Caco-2 (cell line): ENCODE measurements at regions of chr10 and their contacts with region 1.

Region 1: DNA sequence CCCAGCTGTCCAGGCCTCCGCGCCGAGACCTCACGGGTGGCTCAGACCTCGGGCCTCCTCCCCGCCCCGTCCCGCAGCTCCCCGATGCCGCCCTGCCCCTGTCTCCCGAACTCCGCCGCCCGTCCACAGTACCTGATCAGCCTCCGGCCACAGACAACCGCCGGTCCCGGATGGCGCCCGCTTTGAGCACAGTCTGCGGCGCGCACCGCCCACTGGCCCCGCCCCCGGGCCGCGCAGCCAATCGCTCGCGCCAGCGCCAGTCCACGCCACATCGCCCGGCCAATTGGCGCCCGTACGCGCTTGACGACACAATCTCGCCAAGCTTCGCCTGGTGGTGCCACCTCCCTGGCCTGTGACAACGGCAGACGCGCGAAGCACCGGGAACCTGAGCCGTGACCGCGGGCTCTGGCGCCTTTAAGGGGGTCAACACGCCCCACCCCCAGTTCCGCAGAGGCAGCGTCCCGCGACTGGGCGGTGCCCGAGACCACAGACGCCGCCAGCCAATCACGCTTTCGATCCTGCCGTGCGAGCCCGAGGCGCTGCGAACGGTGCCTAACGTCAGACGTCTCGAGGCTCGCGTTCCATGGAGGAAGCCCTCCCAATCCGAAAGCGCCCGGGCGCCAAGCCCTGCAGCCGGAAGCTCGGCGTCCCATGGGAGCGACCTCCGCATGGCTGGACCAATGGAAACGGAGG is at the start of gene IDI1:
- DNase-seq: peak; percentile 100
- H3K4me3 ChIP-seq: peak within 1 kb of the TSS; percentile 80
- H3K4me3 Mint-ChIP-seq: peak within 1 kb of the TSS; percentile 99
- H3K27ac Mint-ChIP-seq: peak within 1 kb of the TSS; percentile 96
- H3K4me1 ChIP-seq: peaks cover 8% of the 10 kb centered on the region; the same call in 1 of the 2 replicates
- H3K4me1 Mint-ChIP-seq: peaks cover 31% of the 10 kb centered on the region
- H3K27me3 ChIP-seq: no peaks in the 10 kb centered on the region
- H3K27me3 Mint-ChIP-seq: no peaks in the 10 kb centered on the region
- CTCF ChIP-seq: no peak
- total RNA-seq, gene IDI1: 121 and 133 TPM in 2 replicates

Region 2: DNA sequence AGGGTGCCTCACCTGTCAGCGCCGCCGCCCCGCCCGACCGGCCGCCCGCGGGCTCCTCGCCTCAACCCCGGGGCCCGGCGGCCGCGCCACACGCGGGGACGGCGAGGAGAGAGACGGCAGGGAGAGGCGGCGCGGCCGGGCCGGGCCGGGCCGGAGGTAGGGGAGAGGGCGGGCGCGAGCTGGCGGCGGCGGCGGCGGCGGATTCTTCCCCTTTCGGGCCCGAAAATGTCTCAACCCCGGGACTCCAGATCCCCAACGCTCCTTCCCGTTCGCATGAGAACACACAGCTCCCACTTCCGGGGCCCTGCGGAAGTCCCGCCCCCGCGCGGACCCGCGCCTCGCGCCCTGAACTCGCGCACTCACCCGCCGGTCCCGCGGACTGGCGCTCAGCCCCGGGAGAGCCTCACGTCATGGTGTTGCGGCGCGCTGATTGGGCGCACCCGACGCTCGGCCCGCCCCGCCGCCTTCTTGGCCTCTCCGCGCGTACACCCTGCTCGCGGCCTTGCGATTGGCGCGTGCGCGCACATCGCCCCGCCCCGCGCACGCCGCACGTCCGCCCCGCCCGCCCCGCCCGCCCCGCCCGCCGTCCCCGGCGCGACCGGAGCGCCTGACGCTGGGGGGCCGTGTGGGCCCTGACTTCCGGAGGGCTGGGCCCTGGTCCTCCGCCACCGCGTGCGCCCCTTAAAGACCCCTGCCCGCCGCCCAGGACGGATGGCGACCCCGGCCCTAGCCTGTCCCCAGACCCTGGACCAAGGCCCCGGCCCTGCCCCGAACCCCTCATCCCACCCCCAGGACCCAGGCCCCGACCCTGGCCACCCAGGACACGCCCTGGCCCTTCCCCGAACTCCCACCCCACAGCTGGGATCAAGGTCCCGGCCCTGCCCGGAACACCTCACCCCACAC is 117.2 kb before region 1 on chr10 and contains the start of gene LARP4B:
- CTCF ChIA-PET with region 1: no interaction called
- POLR2A ChIA-PET with region 1: interaction called, 13 read pairs
- intact Hi-C with region 1: loop called (anchors 1 kb)
- DNase-seq: peak; percentile 98 to 100
- H3K4me3 ChIP-seq: peak within 1 kb of the TSS; percentile 94
- H3K4me3 Mint-ChIP-seq: peak within 1 kb of the TSS; percentile 93
- H3K27ac Mint-ChIP-seq: peak within 1 kb of the TSS; percentile 89
- H3K4me1 ChIP-seq: peaks cover 37% of the 10 kb centered on the region
- H3K4me1 Mint-ChIP-seq: peaks cover 29% of the 10 kb centered on the region
- H3K27me3 ChIP-seq: no peaks in the 10 kb centered on the region
- H3K27me3 Mint-ChIP-seq: no peaks in the 10 kb centered on the region
- CTCF ChIP-seq: no peak
- total RNA-seq, gene LARP4B: 230 and 235 TPM in 2 replicates

Region 3: GRCh38 chr10:970311-971149 is 78.3 kb before region 1 on chr10:
- CTCF ChIA-PET with region 1: no interaction called
- POLR2A ChIA-PET with region 1: interaction called, 12 read pairs
- intact Hi-C with region 1: no loop called
- DNase-seq: peak; percentile 91
- H3K4me3 ChIP-seq: peak overlapping the region; percentile 17
- H3K4me3 Mint-ChIP-seq: peak overlapping the region; percentile 69
- H3K27ac Mint-ChIP-seq: peak overlapping the region; percentile 89
- H3K4me1 ChIP-seq: peaks cover 69% of the 10 kb centered on the region
- H3K4me1 Mint-ChIP-seq: peaks cover 75% of the 10 kb centered on the region
- H3K27me3 ChIP-seq: no peaks in the 10 kb centered on the region
- H3K27me3 Mint-ChIP-seq: no peaks in the 10 kb centered on the region
- CTCF ChIP-seq: peak in 1 of 2 experiments; percentile 6

Region 4: DNA sequence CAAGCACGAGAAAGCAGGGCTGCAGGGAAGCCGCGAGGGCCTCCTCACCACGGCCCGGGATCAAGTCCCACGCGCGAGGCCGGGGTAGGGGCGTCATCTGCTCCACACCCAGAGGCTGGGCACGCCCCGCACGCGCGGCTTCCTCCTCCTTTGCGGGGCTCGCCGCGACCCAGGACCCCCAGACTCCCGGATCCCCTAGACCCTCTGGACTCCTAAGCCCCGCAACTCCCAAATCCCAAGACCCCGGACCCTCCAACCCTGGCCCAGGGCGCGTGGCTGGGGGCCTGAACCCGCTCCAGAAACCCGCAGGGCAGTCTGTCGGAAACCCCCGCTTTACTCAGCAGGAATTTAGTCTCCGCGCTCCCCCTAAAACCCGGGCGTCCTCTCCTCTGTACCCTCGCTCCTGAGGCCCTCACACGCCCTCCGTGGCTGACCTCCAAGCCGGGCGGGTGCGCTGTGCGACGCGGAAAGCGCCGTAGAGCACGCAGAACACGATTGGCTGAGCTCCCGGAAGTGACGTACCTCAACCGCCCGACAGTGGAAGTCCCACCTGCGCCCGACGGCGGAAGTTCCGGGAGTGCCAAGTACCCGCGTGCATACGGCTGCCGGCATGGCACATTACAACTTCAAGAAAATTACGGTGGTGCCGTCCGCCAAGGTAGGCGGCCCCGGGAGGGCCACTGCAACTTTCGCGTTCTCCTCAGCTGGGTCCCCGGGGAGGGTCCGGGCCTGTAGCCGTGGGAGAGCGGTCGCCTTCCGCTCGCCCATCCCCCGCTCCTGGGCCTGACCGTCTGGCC is 60.8 kb before region 1 on chr10 and contains the start of gene GTPBP4:
- CTCF ChIA-PET with region 1: no interaction called
- POLR2A ChIA-PET with region 1: interaction called, 73 read pairs
- intact Hi-C with region 1: loop called (anchors 1 kb)
- DNase-seq: peak; percentile 98
- H3K4me3 ChIP-seq: peak within 1 kb of the TSS; percentile 86
- H3K4me3 Mint-ChIP-seq: peak within 1 kb of the TSS; percentile 99
- H3K27ac Mint-ChIP-seq: peak within 1 kb of the TSS; percentile 99
- H3K4me1 ChIP-seq: peaks cover 52% of the 10 kb centered on the region
- H3K4me1 Mint-ChIP-seq: peaks cover 41% of the 10 kb centered on the region
- H3K27me3 ChIP-seq: no peaks in the 10 kb centered on the region
- H3K27me3 Mint-ChIP-seq: no peaks in the 10 kb centered on the region
- CTCF ChIP-seq: peak in 1 of 2 experiments; percentile 69
- total RNA-seq, gene GTPBP4: 175 and 202 TPM in 2 replicates

Region 5: DNA sequence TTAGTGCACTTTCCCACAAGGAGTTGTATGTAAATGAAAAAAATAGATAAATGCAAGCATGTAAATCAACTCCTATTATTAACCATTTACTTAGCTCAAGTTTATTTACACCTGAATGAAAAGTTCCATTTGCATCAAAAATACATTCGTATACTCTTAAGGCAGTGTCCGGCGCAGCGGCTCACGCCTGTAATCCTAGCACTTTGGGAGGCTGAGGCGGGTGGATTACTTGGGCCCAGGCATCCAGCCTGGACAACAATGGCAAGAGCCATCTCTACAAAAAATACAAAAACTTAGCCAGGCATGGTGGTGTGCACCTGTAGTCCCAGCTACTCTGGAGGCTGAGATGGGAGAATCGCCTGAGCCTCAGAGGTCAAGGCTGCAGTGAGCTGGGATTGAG is 19.0 kb before region 1 on chr10:
- CTCF ChIA-PET with region 1: interaction called, 3 read pairs
- POLR2A ChIA-PET with region 1: interaction called, 11 read pairs
- intact Hi-C with region 1: no loop called
- DNase-seq: no peak
- H3K4me3 ChIP-seq: no peak overlapping the region
- H3K4me3 Mint-ChIP-seq: no peak overlapping the region
- H3K27ac Mint-ChIP-seq: no peak overlapping the region
- H3K4me1 ChIP-seq: 0 out of 2 replicates have a peak, but pooled peaks cover 9% of the 10 kb centered on the region
- H3K4me1 Mint-ChIP-seq: peaks cover 6% of the 10 kb centered on the region
- H3K27me3 ChIP-seq: no peaks in the 10 kb centered on the region
- H3K27me3 Mint-ChIP-seq: no peaks in the 10 kb centered on the region
- CTCF ChIP-seq: no peak

Region 6: GRCh38 chr10:1068380-1069361 is 19.8 kb after region 1 on chr10:
- CTCF ChIA-PET with region 1: no interaction called
- POLR2A ChIA-PET with region 1: interaction called, 13 read pairs
- intact Hi-C with region 1: no loop called
- DNase-seq: no peak
- H3K4me3 ChIP-seq: no peak overlapping the region
- H3K4me3 Mint-ChIP-seq: no peak overlapping the region
- H3K27ac Mint-ChIP-seq: no peak overlapping the region
- H3K4me1 ChIP-seq: peaks cover 17% of the 10 kb centered on the region
- H3K4me1 Mint-ChIP-seq: peaks cover 31% of the 10 kb centered on the region
- H3K27me3 ChIP-seq: no peaks in the 10 kb centered on the region
- H3K27me3 Mint-ChIP-seq: no peaks in the 10 kb centered on the region
- CTCF ChIP-seq: no peak

Region 7: GRCh38 chr10:1074748-1075308 is 25.9 kb after region 1 on chr10:
- CTCF ChIA-PET with region 1: no interaction called
- POLR2A ChIA-PET with region 1: interaction called, 3 read pairs
- intact Hi-C with region 1: loop called (anchors 2 kb)
- DNase-seq: peak in 1 of 2 experiments; percentile 30
- H3K4me3 ChIP-seq: no peak overlapping the region
- H3K4me3 Mint-ChIP-seq: no peak overlapping the region
- H3K27ac Mint-ChIP-seq: no peak overlapping the region
- H3K4me1 ChIP-seq: peaks cover 14% of the 10 kb centered on the region
- H3K4me1 Mint-ChIP-seq: peaks cover 11% of the 10 kb centered on the region
- H3K27me3 ChIP-seq: no peaks in the 10 kb centered on the region
- H3K27me3 Mint-ChIP-seq: no peaks in the 10 kb centered on the region
- CTCF ChIP-seq: peak; percentile 33 to 51

Region 8: DNA sequence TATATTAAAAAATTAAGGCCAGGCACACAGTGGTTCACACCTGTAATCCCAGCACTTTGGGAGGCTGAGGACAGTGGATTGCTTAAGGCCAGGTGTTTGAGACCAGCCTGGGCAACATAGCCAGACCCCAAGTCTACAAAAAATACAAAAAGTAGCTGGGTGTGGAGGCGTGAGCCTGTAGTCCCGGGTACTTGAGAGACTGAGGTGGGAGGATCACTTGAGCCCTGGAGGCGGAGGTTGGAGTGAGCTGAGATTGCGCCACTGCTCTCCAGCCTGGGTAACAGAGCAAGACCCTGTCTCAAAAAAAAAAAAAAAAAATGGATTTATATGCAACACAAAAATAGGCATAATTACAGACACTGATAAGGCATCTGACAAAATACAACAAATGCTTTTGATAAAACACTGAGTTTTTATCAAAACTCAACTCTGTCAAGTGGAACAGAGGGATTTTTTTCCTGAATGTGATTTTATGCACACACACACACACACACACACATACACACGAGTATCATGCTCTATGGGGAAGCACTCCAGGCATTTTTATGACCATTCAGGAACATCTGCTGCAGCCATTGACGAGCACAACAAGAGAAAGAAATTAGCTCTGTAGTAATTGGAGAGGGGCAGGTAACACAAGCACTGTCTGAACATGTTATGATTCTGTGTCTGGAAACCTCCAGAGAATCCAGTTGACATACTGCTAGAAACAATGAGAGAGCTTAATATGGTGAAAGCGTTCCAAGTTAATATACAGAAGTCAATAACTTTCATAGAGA is 200.5 kb after region 1 on chr10:
- CTCF ChIA-PET with region 1: no interaction called
- POLR2A ChIA-PET with region 1: no interaction called
- intact Hi-C with region 1: no loop called
- DNase-seq: no peak
- H3K4me3 ChIP-seq: no peak overlapping the region
- H3K4me3 Mint-ChIP-seq: no peak overlapping the region
- H3K27ac Mint-ChIP-seq: no peak overlapping the region
- H3K4me1 ChIP-seq: no peaks in the 10 kb centered on the region
- H3K4me1 Mint-ChIP-seq: no peaks in the 10 kb centered on the region
- H3K27me3 ChIP-seq: peaks cover 5% of the 10 kb centered on the region
- H3K27me3 Mint-ChIP-seq: peaks cover 36% of the 10 kb centered on the region
- CTCF ChIP-seq: no peak

Region 9: DNA sequence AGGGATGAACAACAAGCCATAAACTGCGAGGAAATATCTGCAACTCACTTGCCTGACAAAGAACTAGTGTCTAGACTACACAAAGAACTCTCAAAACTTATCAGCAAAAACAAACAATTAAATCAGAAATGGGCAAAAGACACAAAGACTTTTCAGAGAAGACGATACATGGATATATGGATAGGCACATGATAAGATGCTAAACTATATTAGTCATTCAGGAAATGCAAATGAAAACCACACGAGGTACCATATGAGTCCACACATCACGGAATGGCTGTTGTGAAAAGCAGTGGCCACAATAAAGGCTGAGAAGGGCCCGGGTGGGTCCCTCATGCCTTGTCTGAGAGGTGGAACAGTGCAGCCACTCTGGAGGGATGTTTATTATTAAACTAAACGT is 275.1 kb after region 1 on chr10:
- CTCF ChIA-PET with region 1: no interaction called
- POLR2A ChIA-PET with region 1: no interaction called
- intact Hi-C with region 1: no loop called
- DNase-seq: no peak
- H3K4me3 ChIP-seq: no peak overlapping the region
- H3K4me3 Mint-ChIP-seq: no peak overlapping the region
- H3K27ac Mint-ChIP-seq: no peak overlapping the region
- H3K4me1 ChIP-seq: no peaks in the 10 kb centered on the region
- H3K4me1 Mint-ChIP-seq: peaks cover 16% of the 10 kb centered on the region
- H3K27me3 ChIP-seq: no peaks in the 10 kb centered on the region
- H3K27me3 Mint-ChIP-seq: peaks cover 8% of the 10 kb centered on the region
- CTCF ChIP-seq: no peak